ENCODE measurements at regions of chr6 and their contacts with region 1.

Region 1: GRCh38 chr6:39377539-39377950 is 55.0 kb upstream of the KCNK16 start:
- DNase-seq: no peak
- H3K4me3 ChIP-seq: no peak overlapping the region
- H3K27me3 ChIP-seq: no peaks in the 10 kb centered on the region
- CTCF ChIP-seq: peak; percentile 65

Region 2: GRCh38 chr6:39166189-39166911 is 211.2 kb before region 1 on chr6:
- CTCF ChIA-PET with region 1: no interaction called
- POLR2A ChIA-PET with region 1: no interaction called
- DNase-seq: no peak
- H3K4me3 ChIP-seq: no peak overlapping the region
- H3K27me3 ChIP-seq: no peaks in the 10 kb centered on the region; the same call in 1 of the 2 replicates
- CTCF ChIP-seq: peak; percentile 86

Region 3: DNA sequence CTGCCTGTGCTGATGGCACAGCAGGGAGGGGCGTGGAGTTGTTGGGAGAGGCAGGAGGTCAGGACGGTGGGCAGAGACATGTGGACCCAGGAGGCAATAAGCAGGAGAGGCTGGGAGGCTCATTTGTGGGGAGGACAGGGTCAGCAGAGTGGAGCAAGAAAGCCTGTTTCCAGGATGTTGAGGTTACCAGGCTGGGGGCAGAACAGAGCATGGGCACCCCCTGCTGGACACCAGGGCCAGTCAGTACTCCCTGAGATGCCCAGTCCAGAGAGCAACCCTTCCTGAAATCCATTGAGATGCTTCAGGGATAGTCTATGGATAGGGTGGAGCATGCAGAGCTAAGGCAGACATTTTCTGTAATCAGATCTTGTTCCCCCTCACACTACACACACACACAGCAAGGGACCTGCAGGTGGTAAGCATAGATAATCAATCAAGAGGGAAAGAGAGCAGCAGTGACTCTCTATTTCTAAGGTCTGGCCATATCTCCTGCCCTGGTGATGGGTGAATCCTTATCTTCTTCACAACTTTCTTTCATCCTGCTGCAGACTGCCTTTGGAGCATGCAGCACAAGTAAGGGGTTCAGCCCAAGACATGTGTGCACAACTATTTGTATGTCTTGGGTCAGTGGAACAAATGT is 515.1 kb after region 1 on chr6:
- CTCF ChIA-PET with region 1: interaction called, 18 read pairs
- POLR2A ChIA-PET with region 1: no interaction called
- DNase-seq: no peak
- H3K4me3 ChIP-seq: no peak overlapping the region
- H3K27me3 ChIP-seq: no peaks in the 10 kb centered on the region
- CTCF ChIP-seq: peak; percentile 82

Measured in BJ (cell line).